ENCODE measurements at regions of chr1 and their contacts with region 1.

Region 1: GRCh38 chr1:46757241-46757959 is 38.5 kb upstream of the EFCAB14 start:
- DNase-seq: no peak
- ATAC-seq: peak in 1 of 8 donors; percentile 60
- H3K4me3 ChIP-seq: no peak overlapping the region
- H3K27ac ChIP-seq: no peak overlapping the region
- H3K4me1 ChIP-seq: no peaks in the 10 kb centered on the region
- H3K27me3 ChIP-seq: peaks cover 0 to 23% (median 3%) of the 10 kb centered on the region in 7 donors
- CTCF ChIP-seq: no peak

Region 2: GRCh38 chr1:46862348-46862747 is 104.9 kb after region 1 on chr1:
- intact Hi-C with region 1: loop called in 1 of 10 experiments (anchors 10 kb)
- DNase-seq: no peak
- ATAC-seq: peak in 1 of 8 donors; percentile 55
- H3K4me3 ChIP-seq: no peak overlapping the region
- H3K27ac ChIP-seq: no peak overlapping the region
- H3K4me1 ChIP-seq: no peaks in the 10 kb centered on the region
- H3K27me3 ChIP-seq: no peaks in the 10 kb centered on the region
- CTCF ChIP-seq: no peak

Measured in heart right ventricle (tissue), 16 donors.